Sigmoid colon (tissue), 7 donors: ENCODE measurements at regions of chr10 and their contacts with region 1.

Region 1: GRCh38 chr10:129971381-129972144 is 7.5 kb upstream of the EBF3 start:
- DNase-seq: peak; percentile 66
- H3K4me3 ChIP-seq: peak overlapping the region in 3 of 4 donors; percentile 27 to 45 (median 41)
- H3K27ac ChIP-seq: no peak overlapping the region
- H3K4me1 ChIP-seq: peaks cover 0 to 61% (median 58%) of the 10 kb centered on the region in 4 donors
- H3K27me3 ChIP-seq: peaks cover 73 to 86% (median 74%) of the 10 kb centered on the region in 3 donors
- CTCF ChIP-seq: peak in 1 of 4 experiments; percentile 54
- EP300 ChIP-seq: no peak
- POLR2A ChIP-seq: no peak

Region 2: GRCh38 chr10:128211953-128212727 is 1759.4 kb before region 1 on chr10:
- intact Hi-C with region 1: loop called (anchors 5 kb)
- DNase-seq: peak; percentile 85
- H3K4me3 ChIP-seq: peak overlapping the region in 2 of 4 donors; percentile 25 to 31
- H3K27ac ChIP-seq: no peak overlapping the region
- H3K4me1 ChIP-seq: peaks cover 0 to 18% (median 10%) of the 10 kb centered on the region in 4 donors
- H3K27me3 ChIP-seq: no peaks in the 10 kb centered on the region
- CTCF ChIP-seq: peak; percentile 53 to 97 (median 74)
- EP300 ChIP-seq: no peak
- POLR2A ChIP-seq: no peak

Region 3: GRCh38 chr10:128263891-128264688 is 1707.5 kb before region 1 on chr10:
- intact Hi-C with region 1: loop called (anchors 10 kb)
- DNase-seq: peak; percentile 76
- H3K4me3 ChIP-seq: no peak overlapping the region
- H3K27ac ChIP-seq: no peak overlapping the region
- H3K4me1 ChIP-seq: no peaks in the 10 kb centered on the region
- H3K27me3 ChIP-seq: peaks cover 0 to 58% (median 29%) of the 10 kb centered on the region in 3 donors
- CTCF ChIP-seq: peak in 2 of 4 experiments; percentile 34 to 49
- EP300 ChIP-seq: no peak
- POLR2A ChIP-seq: no peak

Region 4: GRCh38 chr10:129030996-129031843 is 940.3 kb before region 1 on chr10:
- intact Hi-C with region 1: loop called (anchors 1 kb)
- DNase-seq: no peak
- H3K4me3 ChIP-seq: no peak overlapping the region
- H3K27ac ChIP-seq: no peak overlapping the region
- H3K4me1 ChIP-seq: peaks cover 0 to 11% (median 6%) of the 10 kb centered on the region in 4 donors
- H3K27me3 ChIP-seq: peaks cover 0 to 79% (median 43%) of the 10 kb centered on the region in 3 donors
- CTCF ChIP-seq: peak; percentile 75 to 92 (median 79)
- EP300 ChIP-seq: no peak
- POLR2A ChIP-seq: no peak

Region 5: DNA sequence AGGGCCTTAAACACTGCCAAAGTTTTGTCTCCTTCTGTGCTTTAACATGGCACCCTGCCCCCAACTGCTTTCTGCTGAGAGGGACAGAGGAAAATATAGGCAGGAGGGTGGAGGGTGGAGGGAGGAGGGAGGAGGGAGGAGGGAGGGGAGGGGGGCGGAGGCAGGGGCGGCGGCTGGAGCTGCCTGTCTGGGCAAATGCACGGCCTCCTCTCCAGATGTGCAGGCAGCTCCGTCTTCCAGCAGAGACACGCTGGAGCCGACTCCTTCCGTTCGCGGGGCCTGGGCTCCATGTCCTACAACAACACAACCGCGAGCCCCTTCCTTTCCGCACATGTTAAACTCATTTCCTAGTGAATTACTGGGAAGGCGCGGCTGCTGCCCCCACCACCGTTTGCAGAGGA is 21.7 kb before region 1 on chr10:
- intact Hi-C with region 1: no loop called
- DNase-seq: peak; percentile 69
- H3K4me3 ChIP-seq: no peak overlapping the region
- H3K27ac ChIP-seq: peak overlapping the region in 2 of 4 donors; percentile 21 to 38
- H3K4me1 ChIP-seq: peaks cover 0 to 16% (median 10%) of the 10 kb centered on the region in 4 donors
- H3K27me3 ChIP-seq: peaks cover 0 to 38% (median 8%) of the 10 kb centered on the region in 3 donors
- CTCF ChIP-seq: no peak
- EP300 ChIP-seq: no peak
- POLR2A ChIP-seq: no peak